ENCODE measurements at regions of chr13 and their contacts with region 1.

Region 1: GRCh38 chr13:50224534-50224933 is 209.3 kb downstream of the KCNRG start:
- DNase-seq: no peak
- H3K4me3 Mint-ChIP-seq: peak overlapping the region; percentile 12
- H3K27ac Mint-ChIP-seq: peak overlapping the region; percentile 24
- H3K4me1 Mint-ChIP-seq: peaks cover 75% of the 10 kb centered on the region
- H3K27me3 Mint-ChIP-seq: peaks cover 38% of the 10 kb centered on the region

Region 2: GRCh38 chr13:50167224-50167947 is 57.1 kb before region 1 on chr13:
- intact Hi-C with region 1: loop called (anchors 1 kb)
- DNase-seq: no peak
- H3K4me3 Mint-ChIP-seq: no peak overlapping the region
- H3K27ac Mint-ChIP-seq: no peak overlapping the region
- H3K4me1 Mint-ChIP-seq: peaks cover 10% of the 10 kb centered on the region
- H3K27me3 Mint-ChIP-seq: peaks cover 20% of the 10 kb centered on the region

Region 3: DNA sequence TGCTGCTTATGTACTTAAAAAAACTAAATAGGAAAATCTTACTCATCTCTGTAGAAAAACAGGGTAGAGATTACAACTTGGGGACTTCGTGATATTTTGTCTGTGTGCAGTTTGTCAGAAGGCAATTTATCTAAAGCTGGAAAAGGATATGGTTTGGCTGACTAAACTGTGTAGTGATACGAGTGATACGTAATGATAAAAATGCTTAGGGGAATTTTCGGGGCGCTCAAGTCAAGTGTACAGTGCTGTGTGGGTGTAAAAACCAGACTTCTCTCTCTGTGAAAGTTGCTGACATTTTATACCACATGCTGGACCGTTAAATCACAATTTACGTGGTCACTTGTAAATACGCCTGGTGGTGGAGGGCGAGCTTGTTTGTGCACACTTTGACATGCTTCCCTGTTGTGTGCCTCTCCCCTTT is 12.4 kb after region 1 on chr13:
- intact Hi-C with region 1: loop called (anchors 1 kb)
- DNase-seq: peak; percentile 45
- H3K4me3 Mint-ChIP-seq: peak overlapping the region; percentile 27
- H3K27ac Mint-ChIP-seq: peak overlapping the region; percentile 78
- H3K4me1 Mint-ChIP-seq: peaks cover 59% of the 10 kb centered on the region
- H3K27me3 Mint-ChIP-seq: peaks cover 22% of the 10 kb centered on the region

Region 4: DNA sequence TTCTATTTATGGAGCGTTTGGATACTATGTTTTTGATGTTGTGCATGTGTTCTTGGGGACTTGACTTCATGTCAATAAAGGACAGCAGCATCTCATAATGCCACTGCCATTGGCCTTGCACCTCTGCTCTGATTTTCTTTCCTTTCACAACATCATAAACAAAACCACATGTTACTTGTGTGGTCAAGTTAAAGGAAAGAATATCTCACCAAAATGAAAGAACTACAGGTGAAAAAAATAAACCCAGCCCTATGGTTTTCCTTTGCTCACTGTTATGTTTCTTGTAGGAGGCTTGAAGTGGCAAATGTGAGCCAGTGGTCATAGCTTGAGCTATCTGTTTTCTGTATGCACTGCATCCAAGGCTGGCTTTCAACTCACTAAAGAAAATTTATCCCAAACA is 31.1 kb after region 1 on chr13:
- intact Hi-C with region 1: loop called (anchors 1 kb)
- DNase-seq: no peak
- H3K4me3 Mint-ChIP-seq: no peak overlapping the region
- H3K27ac Mint-ChIP-seq: peak overlapping the region; percentile 62
- H3K4me1 Mint-ChIP-seq: peaks cover 69% of the 10 kb centered on the region
- H3K27me3 Mint-ChIP-seq: peaks cover 46% of the 10 kb centered on the region

Region 5: DNA sequence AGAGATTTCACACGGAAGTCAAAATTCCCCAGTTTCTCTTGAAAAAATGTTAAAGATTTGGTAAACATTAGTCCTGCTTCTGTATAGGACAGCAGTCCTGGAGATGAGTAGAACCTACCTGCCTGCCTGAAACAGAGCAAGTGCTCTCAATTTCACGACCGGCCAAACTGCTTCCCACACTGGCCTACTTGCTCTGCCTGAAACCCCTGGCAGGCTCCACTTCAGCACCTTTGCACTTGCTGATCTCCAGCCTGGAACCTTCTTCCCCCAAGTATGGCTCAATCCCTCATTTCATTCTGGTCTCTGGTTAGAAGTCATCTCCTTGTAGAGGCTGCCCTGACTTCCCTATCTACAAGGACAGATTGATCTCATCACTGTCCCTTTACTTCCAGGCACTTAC is 347.6 kb after region 1 on chr13:
- intact Hi-C with region 1: no loop called
- DNase-seq: no peak
- H3K4me3 Mint-ChIP-seq: no peak overlapping the region
- H3K27ac Mint-ChIP-seq: no peak overlapping the region
- H3K4me1 Mint-ChIP-seq: no peaks in the 10 kb centered on the region
- H3K27me3 Mint-ChIP-seq: peaks cover 7% of the 10 kb centered on the region

Measured in activated T-helper 1 cell treated with anti-CD3 and anti-CD28 coated beads, Interleukin-12 subunit alpha, Interleukin-12 subunit beta, Interleukin-2, Interleukin-4 antibody, amounts not matched to agents 30 ng/mL and 10 ng/mL and 1 ng/mL, durations not matched to agents 14 hours and 24 hours and 36 hours (primary cell).